PC-9 (cell line): ENCODE measurements at regions of chr3 and their contacts with region 1.

Region 1: GRCh38 chr3:140570607-140571006 is 107.3 kb upstream of the TRIM42 start:
- DNase-seq: no peak
- H3K4me3 ChIP-seq: no peak overlapping the region
- H3K27ac ChIP-seq: no peak overlapping the region
- H3K4me1 ChIP-seq: no peaks in the 10 kb centered on the region
- H3K27me3 ChIP-seq: no peaks in the 10 kb centered on the region
- CTCF ChIP-seq: no peak

Region 2: GRCh38 chr3:139745831-139746230 is 824.8 kb before region 1 on chr3:
- CTCF ChIA-PET with region 1: no interaction called
- POLR2A ChIA-PET with region 1: no interaction called
- intact Hi-C with region 1: no loop called
- DNase-seq: no peak
- H3K4me3 ChIP-seq: no peak overlapping the region
- H3K27ac ChIP-seq: no peak overlapping the region
- H3K4me1 ChIP-seq: 0 out of 2 replicates have a peak, but pooled peaks cover 3% of the 10 kb centered on the region
- H3K27me3 ChIP-seq: no peaks in the 10 kb centered on the region; the same call in 1 of the 2 replicates
- CTCF ChIP-seq: no peak

Region 3: DNA sequence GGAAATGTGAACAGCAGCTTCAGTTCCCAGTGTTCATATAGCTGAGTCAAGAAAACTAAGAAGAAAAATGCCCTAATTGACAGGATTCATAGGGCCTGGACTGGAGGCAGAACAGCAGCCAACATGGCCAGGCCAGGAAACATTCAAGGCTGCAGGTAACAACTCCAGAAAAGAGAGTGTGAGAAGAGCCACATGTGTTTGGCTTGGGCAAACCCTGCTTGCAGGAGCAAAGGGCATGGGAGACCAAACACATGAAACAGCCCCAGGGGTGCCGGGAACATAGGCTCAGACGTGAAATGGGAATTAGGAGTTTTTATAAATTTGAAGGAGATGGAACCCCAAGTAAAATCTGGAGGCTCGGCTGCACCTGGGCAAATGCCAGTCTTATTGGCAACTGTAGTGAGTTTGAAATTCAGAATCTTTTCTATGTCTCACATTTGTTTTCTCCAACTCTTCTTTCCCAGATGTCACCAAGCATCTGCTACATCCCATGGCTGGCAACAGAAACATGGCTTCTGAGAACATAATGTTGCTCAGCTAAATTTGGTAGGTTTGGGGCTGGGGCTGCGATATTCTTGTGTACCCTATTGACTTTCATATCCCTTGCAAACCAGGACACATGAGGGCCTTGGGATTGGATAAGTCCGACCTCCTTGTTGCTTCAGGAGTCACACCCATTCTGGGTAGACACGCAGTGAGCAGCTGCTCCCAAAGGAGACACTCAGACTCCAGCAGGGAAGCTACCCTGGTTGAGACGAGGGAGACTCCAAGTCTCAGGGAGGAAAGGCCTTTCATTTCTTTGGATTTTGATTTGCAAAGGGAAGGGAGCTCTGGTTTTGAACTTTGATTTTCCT is 734.5 kb before region 1 on chr3:
- CTCF ChIA-PET with region 1: no interaction called
- POLR2A ChIA-PET with region 1: no interaction called
- intact Hi-C with region 1: no loop called
- DNase-seq: no peak
- H3K4me3 ChIP-seq: no peak overlapping the region
- H3K27ac ChIP-seq: no peak overlapping the region
- H3K4me1 ChIP-seq: no peaks in the 10 kb centered on the region
- H3K27me3 ChIP-seq: peaks cover 25% of the 10 kb centered on the region
- CTCF ChIP-seq: no peak

Region 4: GRCh38 chr3:140629357-140630139 is 58.9 kb after region 1 on chr3:
- CTCF ChIA-PET with region 1: no interaction called
- POLR2A ChIA-PET with region 1: no interaction called
- intact Hi-C with region 1: loop called (anchors 2 kb)
- DNase-seq: peak; percentile 56 to 92
- H3K4me3 ChIP-seq: no peak overlapping the region
- H3K27ac ChIP-seq: peak overlapping the region; percentile 72
- H3K4me1 ChIP-seq: peaks cover 30% of the 10 kb centered on the region
- H3K27me3 ChIP-seq: no peaks in the 10 kb centered on the region
- CTCF ChIP-seq: no peak